K562 (cell line): ENCODE measurements at regions of chr10 and their contacts with region 1.

Region 1: DNA sequence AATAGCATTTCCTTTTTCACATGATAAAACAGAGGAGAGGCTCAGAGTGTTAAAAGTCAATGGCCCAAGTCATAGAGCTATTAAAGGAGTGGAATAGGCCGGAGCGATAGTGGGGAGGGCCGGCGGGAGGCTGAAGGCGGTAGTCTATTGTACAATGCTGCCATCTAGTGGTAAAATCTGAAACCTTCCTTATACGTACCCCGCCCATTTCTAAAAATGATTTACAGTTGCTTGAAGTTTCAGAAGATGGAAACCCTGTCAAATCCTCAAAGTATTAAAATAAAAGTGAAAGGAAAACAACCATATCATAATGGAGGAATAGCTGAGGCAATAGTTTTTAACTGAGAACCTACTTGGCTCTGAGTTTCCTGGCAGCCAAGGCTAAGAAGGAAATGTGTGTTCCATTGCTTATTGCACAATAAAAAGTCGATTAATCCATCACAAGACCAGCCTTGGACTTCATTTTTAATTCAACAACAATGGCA is 209.1 kb downstream of the CCSER2 start:
- DNase-seq: peak; percentile 81 to 89 (median 88)
- ATAC-seq: peak; percentile 86
- H3K4me3 ChIP-seq: no peak overlapping the region
- H3K27ac ChIP-seq: no peak overlapping the region
- H3K4me1 ChIP-seq: peaks cover 0 to 10% of the 10 kb centered on the region in 2 experiments; a peak in 3 of 5 replicates
- H3K27me3 ChIP-seq: peaks cover 0 to 18% of the 10 kb centered on the region in 2 experiments; a peak in 2 of 5 replicates
- CTCF ChIP-seq: peak; percentile 79 to 97 (median 85)
- EP300 ChIP-seq: no peak
- POLR2A ChIP-seq: no peak
- RAD21 ChIP-seq: peak; percentile 99

Region 2: GRCh38 chr10:84214612-84215235 is 322.8 kb before region 1 on chr10:
- CTCF ChIA-PET with region 1: no interaction called
- POLR2A ChIA-PET with region 1: no interaction called
- in situ Hi-C with region 1: no loop called
- intact Hi-C with region 1: loop called (anchors 1 kb)
- DNase-seq: peak; percentile 60 to 82 (median 72)
- ATAC-seq: peak; percentile 96
- H3K4me3 ChIP-seq: no peak overlapping the region
- H3K27ac ChIP-seq: no peak overlapping the region
- H3K4me1 ChIP-seq: peaks cover 0 to 6% of the 10 kb centered on the region in 2 experiments; a peak in 2 of 5 replicates
- H3K27me3 ChIP-seq: peaks cover 2 to 34% of the 10 kb centered on the region in 2 experiments; a peak in 4 of 5 replicates
- CTCF ChIP-seq: peak; percentile 77 to 83 (median 78)
- EP300 ChIP-seq: no peak
- POLR2A ChIP-seq: no peak
- RAD21 ChIP-seq: peak in 1 of 2 experiments; percentile 53; a peak in 2 of 4 replicates

Region 3: DNA sequence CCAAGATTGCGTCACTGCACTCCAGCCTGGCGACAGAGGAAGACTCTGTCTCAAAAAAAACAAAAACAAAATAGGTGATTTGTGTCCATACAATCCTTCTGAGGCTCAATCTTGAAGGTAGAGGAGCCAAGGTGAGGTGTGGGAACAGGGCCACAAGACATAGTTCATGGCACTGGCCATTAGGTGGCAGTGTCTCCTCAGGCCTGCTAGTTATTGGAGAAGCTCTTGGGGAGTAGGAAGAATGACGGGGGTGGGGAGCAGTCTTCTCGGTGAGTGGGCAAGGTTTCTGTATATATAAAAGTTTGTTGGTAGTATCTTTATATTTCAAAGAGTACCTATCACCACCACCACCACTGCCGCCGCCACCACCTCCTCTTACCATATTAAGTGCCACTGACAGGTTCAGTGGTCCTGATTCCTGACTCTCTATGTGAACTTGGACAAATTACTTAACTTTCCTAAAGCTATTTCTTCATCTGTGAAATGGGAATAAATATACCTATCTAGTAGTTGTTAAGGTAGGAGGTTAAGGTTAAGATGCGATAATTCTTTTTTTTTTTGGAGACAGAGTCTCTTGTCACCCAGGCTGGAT is 185.1 kb before region 1 on chr10:
- CTCF ChIA-PET with region 1: interaction called, 4 read pairs
- POLR2A ChIA-PET with region 1: interaction called, 3 read pairs
- in situ Hi-C with region 1: no loop called
- intact Hi-C with region 1: loop called (anchors 1 kb)
- DNase-seq: peak; percentile 67 to 86 (median 74)
- ATAC-seq: peak; percentile 99
- H3K4me3 ChIP-seq: no peak overlapping the region
- H3K27ac ChIP-seq: no peak overlapping the region
- H3K4me1 ChIP-seq: no peaks in the 10 kb centered on the region; a peak in 1 of 5 replicates
- H3K27me3 ChIP-seq: no peaks in the 10 kb centered on the region
- CTCF ChIP-seq: peak; percentile 86 to 90 (median 87)
- EP300 ChIP-seq: no peak
- POLR2A ChIP-seq: no peak
- RAD21 ChIP-seq: peak; percentile 52 to 75

Region 4: GRCh38 chr10:84429926-84430520 is 107.5 kb before region 1 on chr10:
- CTCF ChIA-PET with region 1: interaction called, 24 read pairs
- POLR2A ChIA-PET with region 1: interaction called, 3 read pairs
- in situ Hi-C with region 1: no loop called
- intact Hi-C with region 1: loop called (anchors 1 kb)
- DNase-seq: peak; percentile 61 to 81 (median 65)
- ATAC-seq: peak; percentile 98
- H3K4me3 ChIP-seq: no peak overlapping the region
- H3K27ac ChIP-seq: no peak overlapping the region
- H3K4me1 ChIP-seq: no peaks in the 10 kb centered on the region; a peak in 1 of 5 replicates
- H3K27me3 ChIP-seq: no peaks in the 10 kb centered on the region
- CTCF ChIP-seq: peak; percentile 81 to 89 (median 88)
- EP300 ChIP-seq: no peak
- POLR2A ChIP-seq: no peak
- RAD21 ChIP-seq: peak; percentile 72 to 87

Region 5: GRCh38 chr10:84665883-84666463 is 128.5 kb after region 1 on chr10:
- CTCF ChIA-PET with region 1: no interaction called
- POLR2A ChIA-PET with region 1: no interaction called
- in situ Hi-C with region 1: no loop called
- intact Hi-C with region 1: loop called (anchors 10 kb)
- DNase-seq: peak; percentile 71 to 76 (median 74)
- ATAC-seq: peak; percentile 100
- H3K4me3 ChIP-seq: no peak overlapping the region
- H3K27ac ChIP-seq: no peak overlapping the region
- H3K4me1 ChIP-seq: no peaks in the 10 kb centered on the region
- H3K27me3 ChIP-seq: peaks cover 0 to 8% of the 10 kb centered on the region in 2 experiments; a peak in 2 of 5 replicates
- CTCF ChIP-seq: peak; percentile 84 to 91 (median 85)
- EP300 ChIP-seq: no peak
- POLR2A ChIP-seq: no peak
- RAD21 ChIP-seq: peak; percentile 21 to 69; a peak in 2 of 4 replicates

Region 6: DNA sequence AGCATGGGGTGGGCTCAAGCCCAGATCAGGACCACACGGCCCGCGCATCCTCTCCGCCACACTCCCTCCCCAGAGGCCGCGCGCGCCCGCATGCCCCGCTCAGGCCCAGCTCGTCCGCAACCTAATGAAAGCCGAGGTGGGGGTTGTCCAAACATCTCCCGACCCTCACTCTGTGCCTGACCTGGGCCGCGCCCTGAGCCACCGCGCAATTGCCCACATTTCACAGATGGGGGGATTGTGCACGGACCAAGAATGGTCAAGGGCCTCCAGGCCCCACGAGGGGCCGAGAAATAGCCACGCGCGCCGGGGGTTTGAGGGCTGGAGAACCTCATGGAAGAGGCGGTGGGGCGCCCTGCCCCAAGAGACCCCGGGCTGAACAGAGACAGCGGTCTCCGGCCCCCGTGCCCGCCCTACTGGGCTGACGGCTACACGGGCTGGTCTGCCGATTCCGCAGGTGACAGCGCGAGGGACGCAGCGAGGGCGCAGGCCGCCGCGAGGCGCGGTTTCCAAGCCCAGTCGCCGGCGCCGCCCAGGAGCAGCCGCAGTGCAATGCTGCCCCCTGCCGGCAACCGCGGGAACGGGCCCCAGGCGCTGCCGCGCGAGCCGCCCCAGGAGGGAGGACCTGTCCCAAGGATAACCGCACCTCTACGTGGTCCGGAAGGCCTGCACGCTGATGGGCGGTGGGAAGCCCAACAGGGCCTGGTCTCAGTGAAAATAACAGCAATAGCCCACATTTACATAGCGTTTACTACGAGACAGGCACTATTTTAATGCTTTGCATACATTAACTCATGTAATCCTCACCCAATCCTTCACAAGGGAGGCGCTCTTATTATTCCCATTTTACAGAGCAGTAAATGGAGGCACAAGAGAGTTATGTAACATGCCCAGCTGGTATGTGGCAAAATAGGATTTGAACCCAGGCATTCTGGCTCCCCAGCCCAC is 1839.6 kb after region 1 on chr10:
- CTCF ChIA-PET with region 1: interaction called, 4 read pairs
- POLR2A ChIA-PET with region 1: no interaction called
- in situ Hi-C with region 1: no loop called
- intact Hi-C with region 1: loop called (anchors 10 kb)
- DNase-seq: peak; percentile 74 to 79 (median 78)
- ATAC-seq: peak; percentile 99
- H3K4me3 ChIP-seq: no peak overlapping the region
- H3K27ac ChIP-seq: no peak overlapping the region
- H3K4me1 ChIP-seq: peaks cover 0 to 9% of the 10 kb centered on the region in 2 experiments; a peak in 2 of 5 replicates
- H3K27me3 ChIP-seq: peaks cover 0 to 9% of the 10 kb centered on the region in 2 experiments; a peak in 2 of 5 replicates
- CTCF ChIP-seq: peak; percentile 80 to 96 (median 82)
- EP300 ChIP-seq: no peak
- POLR2A ChIP-seq: no peak
- RAD21 ChIP-seq: peak; percentile 80 to 90